CD4-positive, alpha-beta T cell (primary cell): ENCODE measurements at regions of chr18 and their contacts with region 1.

Region 1: GRCh38 chr18:3062798-3063680 is 50.1 kb upstream of the LPIN2 start:
- DNase-seq: peak; percentile 62 to 87 (median 74)
- ATAC-seq: peak; percentile 35
- H3K4me3 ChIP-seq: peak overlapping the region; percentile 54
- H3K4me3 Mint-ChIP-seq: peak overlapping the region; percentile 43
- H3K27ac ChIP-seq: peak overlapping the region; percentile 95 to 96
- H3K27ac Mint-ChIP-seq: peak overlapping the region; percentile 96
- H3K4me1 ChIP-seq: peaks cover 63% of the 10 kb centered on the region
- H3K4me1 Mint-ChIP-seq: peaks cover 72% of the 10 kb centered on the region
- H3K27me3 ChIP-seq: no peaks in the 10 kb centered on the region
- H3K27me3 Mint-ChIP-seq: no peaks in the 10 kb centered on the region
- CTCF ChIP-seq: peak; percentile 87

Region 2: GRCh38 chr18:1464444-1465217 is 1598.4 kb before region 1 on chr18:
- CTCF ChIA-PET with region 1: no interaction called
- POLR2A ChIA-PET with region 1: no interaction called
- intact Hi-C with region 1: no loop called
- DNase-seq: no peak
- ATAC-seq: no peak
- H3K4me3 ChIP-seq: no peak overlapping the region
- H3K4me3 Mint-ChIP-seq: no peak overlapping the region
- H3K27ac ChIP-seq: no peak overlapping the region
- H3K27ac Mint-ChIP-seq: no peak overlapping the region
- H3K4me1 ChIP-seq: no peaks in the 10 kb centered on the region
- H3K4me1 Mint-ChIP-seq: no peaks in the 10 kb centered on the region
- H3K27me3 ChIP-seq: no peaks in the 10 kb centered on the region
- H3K27me3 Mint-ChIP-seq: no peaks in the 10 kb centered on the region
- CTCF ChIP-seq: no peak

Region 3: DNA sequence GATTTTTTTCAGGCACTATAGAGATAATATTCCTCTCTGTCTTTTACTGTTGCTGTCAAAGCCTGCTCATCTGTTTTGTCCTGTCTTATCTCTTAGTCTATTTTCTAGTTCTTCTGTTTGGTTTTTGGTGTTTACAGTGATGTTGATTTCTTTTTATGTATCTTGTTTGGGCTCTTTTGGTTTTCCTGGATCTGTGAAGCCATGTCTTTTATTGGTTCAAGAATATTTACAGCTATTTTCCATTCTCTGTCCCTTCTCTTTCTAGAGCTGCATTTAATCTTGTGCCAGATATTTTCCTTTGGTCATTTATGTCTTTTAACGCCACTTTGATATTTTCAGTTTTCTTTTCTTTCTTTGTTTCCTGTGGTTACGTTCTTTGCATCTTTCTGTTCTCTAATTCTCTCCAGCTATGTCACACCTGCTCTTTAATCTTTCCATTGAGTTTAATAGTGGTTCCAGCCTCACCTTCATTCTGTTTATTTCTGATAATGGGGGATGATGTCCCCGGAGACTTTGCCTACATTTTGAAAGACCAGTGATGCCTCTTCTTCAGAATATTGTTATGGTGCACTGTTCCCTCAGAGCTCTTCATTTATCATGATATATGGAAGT is 375.5 kb before region 1 on chr18:
- CTCF ChIA-PET with region 1: no interaction called
- POLR2A ChIA-PET with region 1: no interaction called
- intact Hi-C with region 1: no loop called
- DNase-seq: peak in 1 of 14 experiments; percentile 18
- ATAC-seq: no peak
- H3K4me3 ChIP-seq: no peak overlapping the region
- H3K4me3 Mint-ChIP-seq: peak overlapping the region; percentile 11
- H3K27ac ChIP-seq: peak overlapping the region in 1 of 2 donors; percentile 12
- H3K27ac Mint-ChIP-seq: peak overlapping the region; percentile 76
- H3K4me1 ChIP-seq: peaks cover 11% of the 10 kb centered on the region
- H3K4me1 Mint-ChIP-seq: peaks cover 79% of the 10 kb centered on the region
- H3K27me3 ChIP-seq: no peaks in the 10 kb centered on the region
- H3K27me3 Mint-ChIP-seq: no peaks in the 10 kb centered on the region
- CTCF ChIP-seq: no peak

Region 4: GRCh38 chr18:2958819-2959298 is 104.2 kb before region 1 on chr18:
- CTCF ChIA-PET with region 1: interaction called, 3 read pairs
- POLR2A ChIA-PET with region 1: interaction called, 62 read pairs
- intact Hi-C with region 1: no loop called
- DNase-seq: peak in 3 of 14 experiments; percentile 41 to 71 (median 47)
- ATAC-seq: no peak
- H3K4me3 ChIP-seq: no peak overlapping the region
- H3K4me3 Mint-ChIP-seq: peak overlapping the region; percentile 83
- H3K27ac ChIP-seq: peak overlapping the region; percentile 39 to 88
- H3K27ac Mint-ChIP-seq: peak overlapping the region; percentile 96
- H3K4me1 ChIP-seq: peaks cover 76% of the 10 kb centered on the region
- H3K4me1 Mint-ChIP-seq: peaks cover 95% of the 10 kb centered on the region
- H3K27me3 ChIP-seq: no peaks in the 10 kb centered on the region
- H3K27me3 Mint-ChIP-seq: no peaks in the 10 kb centered on the region
- CTCF ChIP-seq: no peak

Region 5: GRCh38 chr18:2985628-2986027 is 77.4 kb before region 1 on chr18:
- CTCF ChIA-PET with region 1: interaction called, 21 read pairs
- POLR2A ChIA-PET with region 1: interaction called, 21 read pairs
- intact Hi-C with region 1: no loop called
- DNase-seq: peak in 4 of 14 experiments; percentile 25 to 77 (median 75)
- ATAC-seq: peak; percentile 69
- H3K4me3 ChIP-seq: no peak overlapping the region
- H3K4me3 Mint-ChIP-seq: no peak overlapping the region
- H3K27ac ChIP-seq: no peak overlapping the region
- H3K27ac Mint-ChIP-seq: peak overlapping the region; percentile 89
- H3K4me1 ChIP-seq: peaks cover 23% of the 10 kb centered on the region
- H3K4me1 Mint-ChIP-seq: peaks cover 79% of the 10 kb centered on the region
- H3K27me3 ChIP-seq: no peaks in the 10 kb centered on the region
- H3K27me3 Mint-ChIP-seq: no peaks in the 10 kb centered on the region
- CTCF ChIP-seq: peak; percentile 74

Region 6: GRCh38 chr18:3074087-3074486 is 11.0 kb after region 1 on chr18:
- CTCF ChIA-PET with region 1: interaction called, 15 read pairs
- POLR2A ChIA-PET with region 1: interaction called, 9 read pairs
- intact Hi-C with region 1: no loop called
- DNase-seq: no peak
- ATAC-seq: no peak
- H3K4me3 ChIP-seq: no peak overlapping the region
- H3K4me3 Mint-ChIP-seq: no peak overlapping the region
- H3K27ac ChIP-seq: no peak overlapping the region
- H3K27ac Mint-ChIP-seq: no peak overlapping the region
- H3K4me1 ChIP-seq: peaks cover 5% of the 10 kb centered on the region
- H3K4me1 Mint-ChIP-seq: peaks cover 25% of the 10 kb centered on the region
- H3K27me3 ChIP-seq: no peaks in the 10 kb centered on the region
- H3K27me3 Mint-ChIP-seq: no peaks in the 10 kb centered on the region
- CTCF ChIP-seq: no peak

Region 7: DNA sequence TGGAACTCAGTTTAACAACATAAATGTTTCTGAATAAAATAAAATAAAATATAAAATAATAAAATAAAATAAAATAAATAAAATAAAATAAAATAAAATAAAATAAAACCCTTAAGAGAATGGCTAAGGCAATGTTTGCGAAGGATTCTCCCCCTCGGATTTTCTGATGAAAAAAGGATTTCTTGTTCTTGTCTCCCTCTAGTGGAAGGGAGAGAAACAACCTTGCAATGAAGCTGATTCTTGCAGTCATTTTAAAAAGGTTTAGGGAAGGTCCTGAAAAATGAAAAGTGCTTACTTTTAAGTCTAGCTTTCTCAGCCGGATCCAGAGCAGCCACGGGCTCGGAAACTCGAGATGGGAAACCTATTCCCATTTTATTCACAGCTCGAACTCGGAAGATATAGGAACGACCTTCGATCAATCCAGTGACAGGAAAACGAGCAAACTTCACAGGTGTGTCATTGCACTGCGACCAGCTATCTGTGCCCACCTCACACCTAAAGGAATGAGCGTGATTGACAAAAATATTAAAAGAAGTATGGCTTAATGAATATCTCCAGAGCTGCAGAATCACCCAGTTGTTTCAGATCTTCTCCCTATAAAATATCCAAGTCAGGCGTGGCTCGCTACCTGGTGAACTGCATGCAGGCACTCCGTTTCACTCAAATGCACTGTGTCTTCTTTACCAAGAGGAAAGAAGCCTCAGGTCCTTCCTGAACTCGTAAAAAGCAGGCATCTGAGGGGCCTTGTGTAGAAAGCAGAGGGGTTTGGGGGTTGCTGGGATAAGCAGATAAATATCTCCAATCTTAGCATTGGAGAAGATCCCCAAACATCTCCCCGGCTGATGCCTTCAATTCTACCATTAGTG is 88.6 kb after region 1 on chr18:
- CTCF ChIA-PET with region 1: interaction called, 5 read pairs
- POLR2A ChIA-PET with region 1: no interaction called
- intact Hi-C with region 1: loop called in 1 of 2 experiments (anchors 5 kb)
- DNase-seq: peak in 3 of 14 experiments; percentile 49 to 60 (median 58)
- ATAC-seq: no peak
- H3K4me3 ChIP-seq: no peak overlapping the region
- H3K4me3 Mint-ChIP-seq: no peak overlapping the region
- H3K27ac ChIP-seq: no peak overlapping the region
- H3K27ac Mint-ChIP-seq: no peak overlapping the region
- H3K4me1 ChIP-seq: peaks cover 4% of the 10 kb centered on the region
- H3K4me1 Mint-ChIP-seq: peaks cover 3% of the 10 kb centered on the region
- H3K27me3 ChIP-seq: no peaks in the 10 kb centered on the region
- H3K27me3 Mint-ChIP-seq: no peaks in the 10 kb centered on the region
- CTCF ChIP-seq: peak; percentile 95

Region 8: GRCh38 chr18:3219631-3220335 is 156.7 kb after region 1 on chr18 and contains the start of gene MYOM1:
- CTCF ChIA-PET with region 1: no interaction called
- POLR2A ChIA-PET with region 1: no interaction called
- intact Hi-C with region 1: no loop called
- DNase-seq: no peak
- ATAC-seq: no peak
- H3K4me3 ChIP-seq: no peak within 1 kb of the TSS
- H3K4me3 Mint-ChIP-seq: no peak within 1 kb of the TSS
- H3K27ac ChIP-seq: no peak within 1 kb of the TSS
- H3K27ac Mint-ChIP-seq: no peak within 1 kb of the TSS
- H3K4me1 ChIP-seq: no peaks in the 10 kb centered on the region
- H3K4me1 Mint-ChIP-seq: peaks cover 5% of the 10 kb centered on the region
- H3K27me3 ChIP-seq: no peaks in the 10 kb centered on the region
- H3K27me3 Mint-ChIP-seq: no peaks in the 10 kb centered on the region
- CTCF ChIP-seq: no peak
- total RNA-seq, gene MYOM1: 0.74 to 1.5 TPM